ENCODE measurements at regions of chr1 and their contacts with region 1.

Region 1: DNA sequence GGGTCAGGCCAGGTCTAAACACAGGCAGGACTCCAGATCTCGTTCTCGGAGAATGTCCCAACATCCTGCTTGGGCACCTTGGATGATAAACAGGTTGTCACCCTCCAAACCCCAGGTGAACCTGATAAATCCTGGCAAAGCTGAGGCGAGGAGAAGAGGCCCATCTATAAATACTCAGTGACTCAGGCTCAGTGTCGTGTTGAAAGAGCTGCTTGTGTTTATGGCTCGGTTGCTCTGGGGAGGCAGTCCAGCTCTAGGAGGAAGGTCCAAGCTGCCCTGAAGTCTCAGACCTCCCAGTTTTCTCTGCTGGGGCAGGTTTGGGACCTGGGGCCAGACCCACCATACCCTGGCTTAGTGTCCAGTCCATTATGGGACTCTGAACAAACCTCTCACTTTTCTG is 15.8 kb upstream of the TRIM63 start:
- DNase-seq: no peak
- H3K4me3 Mint-ChIP-seq: no peak overlapping the region
- H3K27ac Mint-ChIP-seq: no peak overlapping the region
- H3K4me1 Mint-ChIP-seq: no peaks in the 10 kb centered on the region
- H3K27me3 Mint-ChIP-seq: peaks cover 32% of the 10 kb centered on the region

Region 2: DNA sequence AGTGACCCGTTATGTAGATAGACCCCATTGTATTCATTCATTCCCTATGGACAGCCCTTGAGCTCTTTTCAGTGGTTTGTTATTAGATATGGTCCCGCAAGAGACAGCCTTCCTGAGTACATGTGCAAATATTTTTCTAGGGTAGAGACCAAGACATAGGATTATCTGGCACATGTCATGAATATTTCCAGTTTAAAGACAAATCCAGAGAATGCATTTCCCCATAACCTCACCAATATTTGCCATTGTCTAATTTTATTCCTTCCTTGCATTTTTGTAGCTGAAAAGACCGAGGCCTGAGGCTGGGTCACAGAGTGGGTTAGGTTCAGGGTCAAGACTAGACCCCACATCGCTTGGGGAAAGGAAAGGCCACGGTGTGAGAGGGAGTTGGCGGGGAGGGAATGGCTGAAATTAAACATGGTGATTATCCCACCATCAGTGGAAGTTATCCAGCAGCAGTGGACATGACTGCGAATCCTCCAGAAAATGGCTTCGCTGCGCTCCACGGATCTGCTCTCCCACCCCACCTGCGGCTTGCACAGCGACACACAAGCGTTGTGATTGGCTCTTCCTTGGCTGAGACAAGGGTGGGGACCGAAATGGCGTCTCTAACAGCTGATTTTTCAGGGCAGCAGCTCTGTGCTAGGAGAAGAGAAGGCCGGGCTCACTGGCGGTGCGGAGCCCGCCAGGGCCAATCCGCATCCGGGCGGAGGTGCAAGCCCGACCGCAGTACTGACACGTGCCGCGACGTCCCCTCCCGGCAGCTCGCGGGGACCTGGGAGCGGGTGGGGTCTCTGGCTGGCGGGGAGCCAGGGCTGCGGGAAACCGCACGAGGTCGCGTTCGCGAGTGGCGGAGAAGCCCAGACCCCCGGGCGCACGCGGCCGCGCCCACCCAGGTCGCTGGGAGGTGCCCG is 160.9 kb before region 1 on chr1:
- CTCF ChIA-PET with region 1: no interaction called
- POLR2A ChIA-PET with region 1: no interaction called
- DNase-seq: peak; percentile 62
- H3K4me3 Mint-ChIP-seq: peak overlapping the region; percentile 62
- H3K27ac Mint-ChIP-seq: no peak overlapping the region
- H3K4me1 Mint-ChIP-seq: peaks cover 29% of the 10 kb centered on the region
- H3K27me3 Mint-ChIP-seq: peaks cover 41% of the 10 kb centered on the region

Region 3: GRCh38 chr1:26102526-26102925 is 19.3 kb after region 1 on chr1:
- CTCF ChIA-PET with region 1: interaction called, 22 read pairs
- POLR2A ChIA-PET with region 1: no interaction called
- DNase-seq: no peak
- H3K4me3 Mint-ChIP-seq: no peak overlapping the region
- H3K27ac Mint-ChIP-seq: no peak overlapping the region
- H3K4me1 Mint-ChIP-seq: peaks cover 20% of the 10 kb centered on the region
- H3K27me3 Mint-ChIP-seq: peaks cover 16% of the 10 kb centered on the region

Region 4: GRCh38 chr1:26126321-26127084 is 43.3 kb after region 1 on chr1:
- CTCF ChIA-PET with region 1: no interaction called
- POLR2A ChIA-PET with region 1: no interaction called
- DNase-seq: peak; percentile 69
- H3K4me3 Mint-ChIP-seq: peak overlapping the region; percentile 73
- H3K27ac Mint-ChIP-seq: peak overlapping the region; percentile 81
- H3K4me1 Mint-ChIP-seq: peaks cover 74% of the 10 kb centered on the region
- H3K27me3 Mint-ChIP-seq: peaks cover 3% of the 10 kb centered on the region

Measured in activated CD4-positive, alpha-beta memory T cell treated with anti-CD3 and anti-CD28 coated beads, Interleukin-2, amount 10 ng/mL, durations not matched to agents 7 days and 5 days (primary cell).